ENCODE measurements at regions of chr19 and their contacts with region 1.

Region 1: GRCh38 chr19:3429581-3430080 is 50.7 kb downstream of the SMIM24 start:
- DNase-seq: peak; percentile 77 to 89 (median 84)
- H3K4me3 ChIP-seq: peak overlapping the region in 5 of 59 donors; percentile 3 to 33 (median 25)
- H3K27ac ChIP-seq: peak overlapping the region in 58 of 59 donors; percentile 49 to 94 (median 80)
- H3K27me3 ChIP-seq: no peaks in the 10 kb centered on the region
- CTCF ChIP-seq: peak; percentile 93 to 100 (median 98)

Region 2: GRCh38 chr19:3343619-3344502 is 85.8 kb before region 1 on chr19:
- intact Hi-C with region 1: loop called (anchors 5 kb)
- DNase-seq: peak; percentile 57 to 91 (median 84)
- H3K4me3 ChIP-seq: peak overlapping the region in 56 of 59 donors; percentile 6 to 61 (median 42)
- H3K27ac ChIP-seq: peak overlapping the region in 58 of 59 donors; percentile 8 to 92 (median 75)
- H3K27me3 ChIP-seq: no peaks in the 10 kb centered on the region
- CTCF ChIP-seq: peak in 46 of 56 donors; percentile 16 to 61 (median 40)

Region 3: DNA sequence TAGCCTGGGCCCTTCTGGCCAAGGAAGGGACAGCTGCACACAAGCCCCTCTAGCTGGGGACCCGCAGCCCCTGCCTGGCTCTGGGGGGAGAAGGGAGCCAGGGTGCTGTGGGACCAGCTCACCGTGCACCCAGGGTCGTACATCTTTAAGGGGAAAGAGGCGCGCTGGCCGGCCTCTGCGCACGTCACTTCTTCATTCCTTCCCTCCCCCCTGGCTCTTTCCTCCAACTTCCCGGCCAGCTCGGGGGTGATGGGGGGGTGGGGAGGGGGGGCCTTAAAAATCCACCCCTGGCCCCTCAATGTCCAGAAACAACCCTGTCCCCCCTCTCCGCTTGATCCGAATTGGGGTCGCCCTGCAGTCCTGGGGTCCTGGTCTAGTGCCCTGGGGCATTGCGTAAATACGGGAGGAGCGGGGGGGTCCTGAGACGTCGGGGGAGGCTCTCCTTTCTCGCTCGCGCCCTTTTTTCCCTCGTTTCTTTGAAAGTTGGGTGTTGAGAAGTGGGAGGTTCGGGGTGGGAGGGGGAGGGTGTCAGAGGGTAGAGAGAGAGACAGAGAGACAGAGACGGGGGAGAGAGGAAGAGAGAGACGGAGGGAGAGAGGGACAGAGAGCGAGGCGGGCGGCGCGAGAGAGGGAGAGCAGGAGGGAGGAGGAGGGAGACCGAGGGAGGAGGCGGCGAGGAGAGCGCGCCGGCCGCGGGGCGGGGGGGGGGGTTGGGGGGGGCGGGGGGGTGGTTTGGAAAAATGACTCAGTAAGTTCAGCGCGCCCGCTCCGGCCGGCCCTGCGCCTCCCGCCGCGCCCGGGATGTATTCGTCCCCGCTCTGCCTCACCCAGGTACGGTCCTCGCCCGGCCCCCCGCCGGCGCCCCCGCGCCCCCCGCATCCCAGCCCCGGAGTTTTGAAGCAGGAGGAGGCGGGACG is 63.5 kb before region 1 on chr19 and contains the start of gene NFIC:
- intact Hi-C with region 1: loop called in 1 of 2 experiments (anchors 5 kb)
- DNase-seq: peak in 5 of 10 donors; percentile 65 to 77 (median 69)
- H3K4me3 ChIP-seq: peak within 1 kb of the TSS; percentile 59 to 90 (median 75)
- H3K27ac ChIP-seq: peak within 1 kb of the TSS; percentile 63 to 99 (median 92)
- H3K27me3 ChIP-seq: no peaks in the 10 kb centered on the region
- CTCF ChIP-seq: no peak
- total RNA-seq, gene NFIC: 98.0 to 269 (median 135) TPM

Region 4: GRCh38 chr19:3505598-3506383 is 76.2 kb after region 1 on chr19 and contains the start of gene FZR1:
- intact Hi-C with region 1: no loop called
- DNase-seq: peak; percentile 98 to 100 (median 99)
- H3K4me3 ChIP-seq: peak within 1 kb of the TSS; percentile 74 to 99 (median 91)
- H3K27ac ChIP-seq: peak within 1 kb of the TSS in 55 of 59 donors; percentile 58 to 93 (median 85)
- H3K27me3 ChIP-seq: no peaks in the 10 kb centered on the region
- CTCF ChIP-seq: peak in 26 of 56 donors; percentile 5 to 53 (median 18)
- total RNA-seq, gene FZR1: 46.4 to 99.1 (median 71.7) TPM